Ovary (tissue), 10 donors: ENCODE measurements at regions of chr1 and their contacts with region 1.

Region 1: GRCh38 chr1:51044834-51045233 is 57.2 kb upstream of the C1orf185 start:
- DNase-seq: no peak
- H3K4me3 ChIP-seq: no peak overlapping the region
- H3K27ac ChIP-seq: no peak overlapping the region
- H3K4me1 ChIP-seq: no peaks in the 10 kb centered on the region
- H3K27me3 ChIP-seq: no peaks in the 10 kb centered on the region
- CTCF ChIP-seq: peak in 1 of 3 donors; percentile 32
- EP300 ChIP-seq: no peak
- POLR2A ChIP-seq: no peak

Region 2: GRCh38 chr1:50774759-50775351 is 270.0 kb before region 1 on chr1:
- intact Hi-C with region 1: loop called in 2 of 4 experiments (anchors 10 kb)
- DNase-seq: no peak
- H3K4me3 ChIP-seq: no peak overlapping the region
- H3K27ac ChIP-seq: no peak overlapping the region
- H3K4me1 ChIP-seq: peaks cover 2% of the 10 kb centered on the region
- H3K27me3 ChIP-seq: no peaks in the 10 kb centered on the region
- CTCF ChIP-seq: peak; percentile 42 to 63 (median 45)
- EP300 ChIP-seq: no peak
- POLR2A ChIP-seq: no peak